ENCODE measurements at regions of chr13 and their contacts with region 1.

Region 1: DNA sequence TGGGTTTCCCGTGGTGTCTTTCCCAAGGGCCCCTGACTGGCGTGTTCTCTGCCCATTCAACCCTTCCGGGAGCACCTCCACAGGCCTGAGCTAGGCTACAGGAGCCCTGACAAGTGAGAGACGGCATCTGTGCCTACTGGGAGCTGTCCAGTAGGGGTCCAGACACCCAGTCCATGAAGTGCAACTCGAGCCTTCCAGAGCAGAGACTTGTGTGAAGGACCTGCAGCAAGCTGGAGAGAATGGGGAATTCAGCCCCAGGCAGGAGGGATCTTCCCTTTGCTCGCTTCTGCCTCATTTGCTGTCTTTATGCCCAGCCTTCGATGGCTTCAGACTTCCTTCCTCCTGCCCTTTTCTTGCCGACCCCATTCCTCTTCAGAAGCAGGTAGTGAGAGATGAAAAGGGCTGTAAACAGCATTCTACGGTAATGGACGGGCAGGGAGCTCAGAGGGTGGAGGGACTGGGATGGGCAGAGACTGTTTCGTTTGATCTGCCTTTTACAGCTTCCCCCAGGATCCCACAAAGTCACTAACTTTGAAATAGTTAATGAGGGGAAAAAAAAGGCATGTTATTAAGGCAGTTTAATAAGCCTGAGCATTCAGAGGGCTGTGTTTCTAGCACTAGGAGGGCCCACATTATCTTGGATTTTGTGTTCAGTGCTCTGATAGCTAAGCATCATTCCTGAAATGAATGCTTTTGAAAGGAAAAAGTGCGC is 327.6 kb downstream of the FGF9 start:
- DNase-seq: no peak
- ATAC-seq: no peak
- H3K4me3 ChIP-seq: no peak overlapping the region
- H3K27ac ChIP-seq: no peak overlapping the region
- H3K4me1 ChIP-seq: no peaks in the 10 kb centered on the region
- H3K27me3 ChIP-seq: no peaks in the 10 kb centered on the region
- CTCF ChIP-seq: no peak

Region 2: GRCh38 chr13:20869542-20869941 is 1128.9 kb before region 1 on chr13:
- intact Hi-C with region 1: no loop called
- DNase-seq: no peak
- ATAC-seq: peak in 2 of 4 donors; percentile 67 to 70
- H3K4me3 ChIP-seq: no peak overlapping the region
- H3K27ac ChIP-seq: no peak overlapping the region
- H3K4me1 ChIP-seq: peaks cover 18% of the 10 kb centered on the region
- H3K27me3 ChIP-seq: no peaks in the 10 kb centered on the region
- CTCF ChIP-seq: peak; percentile 26

Region 3: GRCh38 chr13:21657538-21657937 is 340.9 kb before region 1 on chr13:
- intact Hi-C with region 1: loop called in 1 of 2 experiments (anchors 5 kb)
- DNase-seq: no peak
- ATAC-seq: no peak
- H3K4me3 ChIP-seq: no peak overlapping the region
- H3K27ac ChIP-seq: no peak overlapping the region
- H3K4me1 ChIP-seq: no peaks in the 10 kb centered on the region
- H3K27me3 ChIP-seq: peaks cover 0 to 6% (median 0%) of the 10 kb centered on the region in 3 donors
- CTCF ChIP-seq: no peak

Measured in psoas muscle (tissue), 8 donors.